AG04450 (cell line): ENCODE measurements at regions of chr2 and their contacts with region 1.

Region 1: DNA sequence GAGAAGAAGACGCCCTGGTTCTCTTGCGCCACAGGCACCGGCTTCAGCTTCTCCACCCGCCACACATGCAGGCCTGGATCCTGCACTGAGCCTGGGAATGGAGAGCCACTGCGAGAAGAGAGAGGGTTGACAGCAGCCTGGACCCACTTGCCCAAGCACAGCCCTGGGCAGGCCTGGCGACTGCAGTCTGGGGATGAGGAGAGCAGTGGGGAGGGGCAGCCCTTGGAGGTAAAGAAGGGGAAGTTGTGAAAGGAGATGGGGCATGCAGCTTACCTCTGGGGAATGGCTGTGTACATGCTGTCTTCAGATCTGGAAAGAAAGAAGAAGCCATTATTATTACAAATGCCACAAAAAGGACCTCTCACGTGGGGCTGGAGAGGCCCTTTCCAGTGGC is 8.3 kb downstream of the CAPG start:
- DNase-seq: no peak
- H3K4me3 ChIP-seq: no peak overlapping the region
- H3K27ac ChIP-seq: no peak overlapping the region
- H3K27me3 ChIP-seq: no peaks in the 10 kb centered on the region
- CTCF ChIP-seq: no peak

Region 2: DNA sequence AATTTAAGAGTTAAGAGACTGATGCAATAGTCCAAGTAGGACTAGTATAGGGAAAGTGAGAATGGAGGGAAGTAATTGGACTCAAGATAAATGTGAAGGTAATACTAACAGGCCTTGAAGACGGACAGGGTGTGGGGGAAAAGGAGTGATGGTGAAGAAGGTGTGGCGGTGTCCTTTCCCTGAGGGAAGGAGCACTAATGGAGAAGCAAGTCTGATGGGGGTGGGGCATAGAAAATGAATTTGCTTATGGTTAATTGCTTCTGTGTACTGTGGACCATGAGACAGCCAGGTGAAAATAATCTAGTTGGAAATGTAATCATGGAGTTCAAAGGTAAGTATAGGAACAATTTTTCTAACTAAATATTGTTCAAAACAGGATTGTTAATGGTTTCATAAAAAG is 66.9 kb before region 1 on chr2:
- CTCF ChIA-PET with region 1: interaction called, 12 read pairs
- POLR2A ChIA-PET with region 1: no interaction called
- DNase-seq: no peak
- H3K4me3 ChIP-seq: no peak overlapping the region
- H3K27ac ChIP-seq: no peak overlapping the region
- H3K27me3 ChIP-seq: peaks cover 6% of the 10 kb centered on the region
- CTCF ChIP-seq: no peak

Region 3: GRCh38 chr2:85933753-85934594 is 532.1 kb after region 1 on chr2:
- CTCF ChIA-PET with region 1: no interaction called
- POLR2A ChIA-PET with region 1: no interaction called
- DNase-seq: no peak
- H3K4me3 ChIP-seq: no peak overlapping the region
- H3K27ac ChIP-seq: peak overlapping the region; percentile 58
- H3K27me3 ChIP-seq: no peaks in the 10 kb centered on the region
- CTCF ChIP-seq: no peak